OCI-LY7 (cell line): ENCODE measurements at regions of chr1 and their contacts with region 1.

Region 1: DNA sequence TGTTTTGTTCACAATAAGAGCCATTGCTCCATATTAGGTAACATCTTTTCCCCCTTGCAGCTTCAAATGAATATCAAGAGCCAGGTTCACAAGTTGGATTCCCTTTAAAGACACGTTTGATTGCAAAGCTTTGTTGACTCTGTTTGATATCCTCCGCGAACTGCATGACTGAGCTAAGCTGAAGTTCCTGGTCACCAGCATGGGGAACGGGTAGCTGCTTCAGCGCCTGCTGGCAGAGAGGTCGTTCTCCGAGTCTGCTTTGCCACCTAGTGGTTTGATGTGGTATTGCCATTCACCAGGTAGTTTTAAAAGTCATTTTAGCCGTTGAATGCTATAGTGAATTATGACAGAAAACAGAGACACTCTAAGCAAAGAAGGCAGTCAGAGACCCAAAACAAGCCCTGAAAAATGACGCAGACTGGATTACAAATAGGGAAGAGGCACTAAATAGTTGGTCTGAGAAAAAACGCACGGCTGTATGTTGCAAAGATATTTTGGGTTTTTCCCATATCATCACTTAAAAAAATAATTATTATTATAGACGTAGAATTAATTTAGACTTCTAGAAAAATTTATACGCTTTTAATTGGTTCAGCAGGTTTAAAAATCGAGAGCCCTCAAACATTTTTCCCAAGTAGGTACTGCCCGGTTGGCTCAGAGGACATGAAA is 193.5 kb upstream of the FMN2 start:
- DNase-seq: peak; percentile 72
- H3K4me3 ChIP-seq: no peak overlapping the region
- H3K27ac ChIP-seq: no peak overlapping the region
- H3K4me1 ChIP-seq: no peaks in the 10 kb centered on the region
- CTCF ChIP-seq: peak; percentile 95

Region 2: DNA sequence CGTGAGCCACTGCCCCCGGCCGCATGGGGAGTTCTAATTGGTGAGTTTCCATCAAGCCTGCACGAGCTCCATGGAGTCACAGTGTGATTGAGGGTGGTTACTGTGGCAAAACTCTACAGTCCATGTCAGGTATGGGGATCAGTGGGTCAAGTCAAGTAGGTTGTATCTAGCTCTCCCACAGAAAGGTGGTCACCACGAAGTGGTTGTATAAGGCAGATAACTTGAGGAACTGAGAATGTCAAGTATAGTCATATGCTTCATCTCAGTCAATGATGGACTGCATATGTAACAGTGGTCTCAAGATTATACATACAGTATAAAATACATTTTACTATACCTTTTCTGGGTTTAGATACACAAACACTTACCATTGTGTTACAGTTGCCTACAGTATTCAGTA is 1658.9 kb before region 1 on chr1:
- CTCF ChIA-PET with region 1: no interaction called
- POLR2A ChIA-PET with region 1: no interaction called
- intact Hi-C with region 1: loop called (anchors 5 kb)
- DNase-seq: no peak
- H3K4me3 ChIP-seq: no peak overlapping the region
- H3K27ac ChIP-seq: no peak overlapping the region
- H3K4me1 ChIP-seq: no peaks in the 10 kb centered on the region
- CTCF ChIP-seq: no peak

Region 3: GRCh38 chr1:238252033-238252802 is 1646.0 kb before region 1 on chr1:
- CTCF ChIA-PET with region 1: no interaction called
- POLR2A ChIA-PET with region 1: no interaction called
- intact Hi-C with region 1: loop called (anchors 5 kb)
- DNase-seq: peak; percentile 19
- H3K4me3 ChIP-seq: no peak overlapping the region
- H3K27ac ChIP-seq: no peak overlapping the region
- H3K4me1 ChIP-seq: no peaks in the 10 kb centered on the region
- CTCF ChIP-seq: peak; percentile 74